ENCODE measurements at regions of chr18 and their contacts with region 1.

Region 1: DNA sequence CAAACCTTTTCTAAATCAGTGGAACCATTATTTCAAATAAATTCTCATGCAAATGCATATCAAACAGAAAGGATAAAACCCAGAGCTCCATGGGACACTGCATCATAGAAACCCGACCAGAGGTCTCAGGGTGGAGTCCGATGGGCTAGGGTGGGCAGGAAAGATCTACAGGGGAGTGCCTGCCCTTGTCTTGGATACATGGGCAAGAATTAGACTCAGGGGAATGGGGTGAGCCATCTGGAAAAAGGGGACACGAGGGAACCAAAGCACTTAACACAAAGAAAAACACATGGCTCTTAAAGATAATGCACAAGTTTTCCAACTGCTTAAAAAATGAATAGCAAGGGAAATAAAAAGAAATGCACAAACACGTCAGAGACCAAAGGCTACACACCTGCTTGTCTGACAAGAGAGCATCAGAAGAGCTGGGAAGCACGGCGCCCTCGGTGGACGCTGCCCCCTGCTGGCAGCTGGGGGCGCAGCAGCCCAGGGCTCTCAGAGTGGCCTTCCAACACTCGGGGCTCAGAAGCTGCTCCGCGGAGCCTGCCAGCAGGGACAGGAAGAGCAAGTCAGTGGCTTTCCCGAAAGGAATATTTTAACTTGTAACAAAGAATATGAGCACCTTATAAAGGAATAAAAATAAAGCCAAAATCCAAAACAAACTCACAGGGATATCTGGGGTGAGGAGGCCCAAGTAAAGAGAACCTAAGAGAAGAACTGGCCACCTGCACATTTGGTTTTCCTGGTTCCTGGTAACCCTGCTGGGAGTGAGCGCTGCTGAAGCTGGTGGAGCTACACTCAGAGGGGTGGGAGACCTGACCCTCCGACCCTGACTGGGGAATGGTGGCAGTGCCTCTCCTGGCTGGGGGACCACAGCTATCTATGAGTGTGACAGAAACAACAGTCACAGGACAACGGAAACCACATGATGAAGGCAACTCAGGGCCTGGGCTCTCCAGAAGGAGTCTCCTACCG is 54.5 kb downstream of the SIGLEC15 start:
- DNase-seq: peak; percentile 76
- ATAC-seq: peak; percentile 95 to 96

Region 2: GRCh38 chr18:45690975-45691815 is 188.8 kb before region 1 on chr18:
- intact Hi-C with region 1: loop called in 1 of 2 experiments (anchors 2 kb)
- DNase-seq: peak; percentile 83
- ATAC-seq: peak; percentile 80 to 90

Region 3: DNA sequence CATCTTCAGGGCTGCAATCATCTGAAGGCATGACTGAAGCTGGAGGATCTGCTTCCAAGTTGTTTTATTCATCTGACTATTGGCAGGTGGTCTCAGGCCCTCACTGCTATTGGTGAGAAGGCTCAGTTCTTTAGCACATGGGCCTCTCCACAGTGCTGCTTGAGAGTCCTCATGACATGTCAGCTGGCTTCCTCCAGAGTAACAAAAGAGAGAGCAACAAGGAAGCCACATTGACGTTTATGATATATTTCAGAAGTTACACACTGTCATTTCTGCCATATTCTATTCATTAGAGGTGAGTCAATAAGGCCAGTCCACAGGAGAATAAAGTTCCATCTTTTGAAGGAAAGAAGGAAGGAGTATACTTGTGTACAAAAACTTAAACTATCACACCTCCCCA is 62.4 kb before region 1 on chr18:
- intact Hi-C with region 1: no loop called
- DNase-seq: no peak
- ATAC-seq: no peak